Lower leg skin (tissue), 4 donors: ENCODE measurements at regions of chr5 and their contacts with region 1.

Region 1: GRCh38 chr5:39691993-39692392 is 267.2 kb upstream of the DAB2 start:
- DNase-seq: no peak
- H3K4me3 ChIP-seq: no peak overlapping the region
- CTCF ChIP-seq: no peak
- POLR2A ChIP-seq: no peak

Region 2: DNA sequence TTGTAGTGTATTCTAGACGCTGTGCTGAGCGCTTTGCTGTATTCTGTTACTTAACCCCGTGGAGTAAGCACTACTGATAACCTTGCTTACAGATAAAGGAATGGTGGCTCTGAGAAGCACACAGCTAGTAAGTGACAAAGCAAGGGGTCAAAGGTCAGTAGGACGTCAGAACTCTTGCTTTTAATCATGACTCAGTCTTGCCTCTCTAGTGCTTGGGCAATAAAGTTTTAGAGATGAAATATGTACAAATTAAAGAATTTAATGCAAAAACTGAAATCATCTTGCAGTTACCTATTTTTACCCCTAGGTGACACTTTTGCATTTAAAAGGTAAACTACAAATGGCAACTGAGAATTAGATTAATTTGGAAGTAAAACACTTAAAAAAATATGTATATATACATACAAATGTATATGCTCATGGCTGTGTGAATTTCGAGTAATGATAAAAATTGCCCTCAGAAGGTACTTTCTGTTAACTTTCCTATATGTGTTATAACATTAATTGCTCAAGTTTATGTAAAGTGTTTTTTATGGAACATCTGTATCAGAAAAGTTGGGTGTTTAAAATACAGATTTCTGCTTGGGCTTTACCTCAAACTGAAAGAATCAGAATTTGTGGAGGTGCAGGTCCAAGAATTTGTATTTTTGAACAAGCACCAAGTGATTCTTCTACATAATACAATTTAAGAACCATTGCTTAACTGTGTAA is 92.1 kb before region 1 on chr5:
- intact Hi-C with region 1: loop called (anchors 10 kb)
- DNase-seq: no peak
- H3K4me3 ChIP-seq: no peak overlapping the region
- CTCF ChIP-seq: no peak
- POLR2A ChIP-seq: no peak

Region 3: DNA sequence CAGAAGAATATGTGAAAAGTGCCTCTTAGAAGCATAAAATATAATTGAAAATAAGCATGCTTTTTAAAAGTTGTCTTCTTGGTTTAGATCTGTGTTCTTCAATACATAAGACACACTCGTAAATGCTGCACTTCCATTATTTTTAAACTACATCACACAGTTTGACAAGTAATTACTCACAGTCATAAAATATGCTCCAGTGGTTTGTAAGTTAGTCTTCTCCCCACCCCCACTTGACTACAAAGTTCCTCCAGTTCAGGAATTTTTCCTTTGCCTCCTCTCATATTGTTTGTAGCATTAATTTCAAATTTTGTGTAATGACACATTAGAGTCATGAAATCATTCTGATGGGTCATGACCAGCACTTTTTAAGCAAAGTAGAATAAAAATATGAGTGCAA is 927.4 kb after region 1 on chr5:
- intact Hi-C with region 1: no loop called
- DNase-seq: no peak
- H3K4me3 ChIP-seq: no peak overlapping the region
- CTCF ChIP-seq: no peak
- POLR2A ChIP-seq: no peak